ENCODE measurements at regions of chrX and their contacts with region 1.

Region 1: DNA sequence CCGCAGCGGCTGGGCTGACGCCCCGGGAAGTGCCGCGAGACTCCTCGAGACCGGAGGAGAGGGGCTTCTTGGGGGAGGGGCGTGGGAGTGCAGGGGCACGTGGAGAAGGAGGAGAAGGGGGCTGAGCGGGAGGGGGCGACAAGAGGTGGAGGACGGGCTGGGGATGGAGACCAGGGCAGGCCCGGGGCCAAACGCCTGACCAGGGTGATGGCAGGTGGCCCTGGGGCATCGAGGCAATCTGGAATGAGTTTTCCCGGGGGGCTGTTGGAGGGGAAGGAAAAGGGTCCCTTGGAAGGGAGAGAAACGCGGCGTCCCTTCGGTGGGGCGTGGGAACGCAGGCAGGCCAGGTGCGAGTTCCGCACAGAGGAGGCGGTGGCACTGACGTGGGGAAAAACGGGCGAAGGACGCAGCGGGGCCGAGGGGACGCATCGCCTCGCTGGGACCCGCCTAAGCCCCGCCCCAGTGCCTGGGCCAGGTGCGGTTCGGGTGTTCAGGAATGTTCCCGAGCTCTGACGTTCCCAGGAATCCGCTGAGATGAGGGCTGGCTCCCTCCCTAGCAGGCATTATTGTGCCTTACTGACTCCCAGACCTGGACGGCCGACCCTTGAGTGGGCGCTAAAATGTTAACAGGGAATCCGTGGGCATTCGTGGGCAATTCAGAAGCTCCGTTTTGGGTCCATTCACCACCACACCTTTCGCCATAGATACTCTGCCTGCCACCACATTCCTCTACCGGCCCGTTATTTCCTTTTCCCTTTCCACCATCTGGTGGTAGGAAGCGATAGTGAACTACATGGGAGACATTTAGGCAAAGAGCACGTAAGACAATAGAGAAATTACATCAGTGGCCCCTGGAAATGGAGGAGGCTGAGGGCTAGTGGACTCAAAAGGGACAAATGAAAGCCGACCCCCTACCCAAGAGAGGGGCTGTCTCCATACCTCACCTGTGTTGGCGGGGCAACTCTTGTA is 795 bp upstream of the SH3KBP1 start:
- DNase-seq: peak; percentile 75
- H3K4me3 ChIP-seq: peak overlapping the region; percentile 34 to 60 (median 46)
- H3K27ac ChIP-seq: peak overlapping the region; percentile 58
- H3K4me1 ChIP-seq: peaks cover 14% of the 10 kb centered on the region
- H3K27me3 ChIP-seq: no peaks in the 10 kb centered on the region
- CTCF ChIP-seq: peak; percentile 36 to 55

Region 2: DNA sequence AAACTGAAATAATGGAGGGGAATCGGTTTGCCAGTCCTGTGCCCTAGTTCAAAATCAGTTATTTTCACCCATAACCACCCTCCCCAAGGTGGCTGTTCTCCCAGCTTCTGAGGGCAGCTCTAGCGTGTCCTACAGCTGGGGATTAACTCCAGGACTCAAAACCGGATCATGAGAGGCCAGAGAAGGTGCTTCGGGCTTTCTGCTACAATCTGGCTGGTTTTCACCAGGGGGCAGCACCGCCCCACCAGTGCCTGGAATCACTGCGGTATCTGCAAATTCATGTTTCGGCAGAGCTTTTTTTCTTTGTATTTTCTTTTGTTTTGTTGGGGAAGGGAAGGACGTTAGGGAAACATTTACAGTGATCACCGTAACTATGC is 516.0 kb before region 1 on chrX:
- CTCF ChIA-PET with region 1: interaction called, 5 read pairs
- dilution Hi-C with region 1: no loop called
- in situ Hi-C with region 1: no loop called
- intact Hi-C with region 1: loop called (anchors 1 kb)
- DNase-seq: peak; percentile 46
- H3K4me3 ChIP-seq: peak overlapping the region in 2 of 3 experiments; percentile 8 to 37
- H3K27ac ChIP-seq: no peak overlapping the region
- H3K4me1 ChIP-seq: peaks cover 4% of the 10 kb centered on the region
- H3K27me3 ChIP-seq: no peaks in the 10 kb centered on the region
- CTCF ChIP-seq: peak; percentile 72

Region 3: GRCh38 chrX:19544693-19545305 is 343.4 kb before region 1 on chrX:
- CTCF ChIA-PET with region 1: no interaction called
- dilution Hi-C with region 1: no loop called
- in situ Hi-C with region 1: no loop called
- intact Hi-C with region 1: loop called (anchors 1 kb)
- DNase-seq: peak; percentile 36
- H3K4me3 ChIP-seq: no peak overlapping the region
- H3K27ac ChIP-seq: no peak overlapping the region
- H3K4me1 ChIP-seq: no peaks in the 10 kb centered on the region
- H3K27me3 ChIP-seq: no peaks in the 10 kb centered on the region
- CTCF ChIP-seq: peak; percentile 79 to 82

Region 4: GRCh38 chrX:19593690-19594089 is 294.5 kb before region 1 on chrX:
- CTCF ChIA-PET with region 1: no interaction called
- dilution Hi-C with region 1: no loop called
- in situ Hi-C with region 1: loop called in 1 of 2 experiments (anchors 25 kb)
- intact Hi-C with region 1: loop called (anchors 1 kb)
- DNase-seq: no peak
- H3K4me3 ChIP-seq: no peak overlapping the region
- H3K27ac ChIP-seq: no peak overlapping the region
- H3K4me1 ChIP-seq: peaks cover 3% of the 10 kb centered on the region
- H3K27me3 ChIP-seq: no peaks in the 10 kb centered on the region
- CTCF ChIP-seq: peak; percentile 45 to 55

Region 5: GRCh38 chrX:19673375-19674040 is 214.7 kb before region 1 on chrX:
- CTCF ChIA-PET with region 1: no interaction called
- dilution Hi-C with region 1: no loop called
- in situ Hi-C with region 1: no loop called
- intact Hi-C with region 1: loop called (anchors 1 kb)
- DNase-seq: peak; percentile 80
- H3K4me3 ChIP-seq: no peak overlapping the region
- H3K27ac ChIP-seq: peak overlapping the region; percentile 68
- H3K4me1 ChIP-seq: peaks cover 30% of the 10 kb centered on the region
- H3K27me3 ChIP-seq: no peaks in the 10 kb centered on the region
- CTCF ChIP-seq: no peak

Region 6: DNA sequence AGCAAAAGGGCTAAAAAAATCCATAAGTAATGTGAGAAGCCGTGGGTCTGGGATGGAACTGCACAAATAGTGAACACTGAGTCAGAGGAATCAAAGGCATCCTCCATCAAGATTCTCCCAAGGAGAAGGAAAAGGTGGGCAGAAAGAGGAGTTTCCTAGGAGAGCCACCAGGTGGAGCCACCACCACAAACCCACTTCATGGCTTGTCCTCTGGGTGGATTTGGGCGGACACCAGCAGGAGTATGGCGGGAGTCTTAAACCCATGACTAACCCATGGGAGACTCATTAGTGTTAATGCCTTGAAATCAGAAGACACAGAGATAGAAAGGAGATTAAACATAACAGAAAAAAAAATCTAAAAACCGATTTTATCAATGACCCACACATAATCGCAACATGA is 148.5 kb before region 1 on chrX:
- CTCF ChIA-PET with region 1: interaction called, 23 read pairs
- dilution Hi-C with region 1: no loop called
- in situ Hi-C with region 1: loop called in 1 of 2 experiments (anchors 10 kb)
- intact Hi-C with region 1: loop called (anchors 1 kb)
- DNase-seq: peak; percentile 61
- H3K4me3 ChIP-seq: no peak overlapping the region
- H3K27ac ChIP-seq: no peak overlapping the region
- H3K4me1 ChIP-seq: no peaks in the 10 kb centered on the region
- H3K27me3 ChIP-seq: no peaks in the 10 kb centered on the region
- CTCF ChIP-seq: peak; percentile 42 to 68

Region 7: GRCh38 chrX:19968276-19968675 is 80.1 kb after region 1 on chrX:
- CTCF ChIA-PET with region 1: no interaction called
- dilution Hi-C with region 1: no loop called
- in situ Hi-C with region 1: no loop called
- intact Hi-C with region 1: no loop called
- DNase-seq: no peak
- H3K4me3 ChIP-seq: no peak overlapping the region
- H3K27ac ChIP-seq: no peak overlapping the region
- H3K4me1 ChIP-seq: no peaks in the 10 kb centered on the region
- H3K27me3 ChIP-seq: no peaks in the 10 kb centered on the region
- CTCF ChIP-seq: no peak